H1 (cell line): ENCODE measurements at regions of chr10 and their contacts with region 1.

Region 1: DNA sequence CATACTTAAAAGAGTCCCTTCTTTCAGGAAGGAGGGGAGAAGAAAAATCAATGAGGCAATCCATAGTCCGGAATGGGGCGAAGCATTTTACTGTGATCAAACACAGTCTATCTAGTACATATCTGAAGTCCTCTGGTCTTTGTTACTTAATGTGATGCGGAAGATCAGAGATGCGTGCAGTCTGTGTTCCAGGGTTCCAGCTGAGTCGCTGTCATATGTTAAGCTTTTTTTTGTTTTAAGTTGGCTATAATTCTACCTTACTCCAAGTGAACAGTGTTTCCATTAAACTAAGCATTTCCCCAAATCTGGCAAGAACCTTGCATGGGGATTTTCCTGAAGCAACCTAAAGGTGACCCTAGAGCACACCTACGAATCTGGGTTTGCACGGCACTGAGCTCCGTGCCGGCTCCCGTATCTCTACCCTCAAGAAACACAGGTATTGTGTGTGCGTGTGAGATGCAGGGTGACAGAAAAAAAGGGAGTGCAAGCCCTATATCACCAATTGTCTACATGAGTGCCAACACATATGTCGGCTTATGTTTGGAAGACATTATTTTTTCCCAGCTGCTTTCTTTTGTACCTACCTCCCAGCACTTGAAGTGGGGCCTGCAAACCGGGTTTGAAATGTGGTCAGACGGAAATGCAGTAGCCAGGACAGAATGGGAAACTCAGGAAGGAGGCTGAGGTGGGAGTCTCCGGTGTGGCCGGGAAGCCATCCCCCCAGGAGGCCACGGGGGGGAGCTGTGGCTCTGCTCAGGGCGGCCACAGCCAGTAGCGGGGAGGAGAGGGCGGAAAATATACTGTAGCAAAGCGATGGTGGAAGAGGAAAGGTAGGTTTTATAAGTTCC is 435.8 kb upstream of the MGMT start:
- DNase-seq: peak; percentile 39 to 80
- H3K4me3 ChIP-seq: no peak overlapping the region
- H3K27ac ChIP-seq: no peak overlapping the region
- H3K4me1 ChIP-seq: peaks cover 0 to 7% (median 3%) of the 10 kb centered on the region in 4 experiments; a peak in 2 of 7 replicates
- H3K27me3 ChIP-seq: no peaks in the 10 kb centered on the region; a peak in 1 of 7 replicates
- CTCF ChIP-seq: peak; percentile 85 to 90 (median 85)
- EP300 ChIP-seq: peak in 1 of 2 experiments; percentile 19; a peak in 1 of 3 replicates
- POLR2A ChIP-seq: no peak
- RAD21 ChIP-seq: peak; percentile 98 to 99

Region 2: DNA sequence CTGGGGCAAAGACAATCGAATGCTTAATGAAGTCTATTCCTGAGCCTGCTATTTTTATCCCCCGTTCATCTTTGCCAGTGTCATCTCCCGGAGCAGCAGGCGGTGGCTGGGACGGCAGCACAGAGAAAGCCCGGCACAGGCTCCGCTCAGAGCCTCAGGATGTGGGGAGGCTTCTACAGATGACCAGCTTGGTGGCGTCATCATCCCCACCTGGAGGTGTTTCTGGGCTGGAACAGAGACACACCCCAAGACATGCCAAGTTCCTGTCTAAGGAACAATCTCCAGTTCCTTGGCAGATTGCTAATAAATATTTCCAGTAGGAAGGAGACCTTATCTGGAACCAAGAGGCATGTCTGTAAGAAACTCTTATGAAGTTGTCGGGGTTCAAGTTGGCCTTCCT is 116.5 kb before region 1 on chr10:
- CTCF ChIA-PET with region 1: no interaction called
- POLR2A ChIA-PET with region 1: no interaction called
- DNase-seq: no peak
- H3K4me3 ChIP-seq: no peak overlapping the region
- H3K27ac ChIP-seq: no peak overlapping the region
- H3K4me1 ChIP-seq: no peaks in the 10 kb centered on the region
- H3K27me3 ChIP-seq: no peaks in the 10 kb centered on the region
- CTCF ChIP-seq: no peak
- EP300 ChIP-seq: no peak
- POLR2A ChIP-seq: no peak
- RAD21 ChIP-seq: no peak

Region 3: DNA sequence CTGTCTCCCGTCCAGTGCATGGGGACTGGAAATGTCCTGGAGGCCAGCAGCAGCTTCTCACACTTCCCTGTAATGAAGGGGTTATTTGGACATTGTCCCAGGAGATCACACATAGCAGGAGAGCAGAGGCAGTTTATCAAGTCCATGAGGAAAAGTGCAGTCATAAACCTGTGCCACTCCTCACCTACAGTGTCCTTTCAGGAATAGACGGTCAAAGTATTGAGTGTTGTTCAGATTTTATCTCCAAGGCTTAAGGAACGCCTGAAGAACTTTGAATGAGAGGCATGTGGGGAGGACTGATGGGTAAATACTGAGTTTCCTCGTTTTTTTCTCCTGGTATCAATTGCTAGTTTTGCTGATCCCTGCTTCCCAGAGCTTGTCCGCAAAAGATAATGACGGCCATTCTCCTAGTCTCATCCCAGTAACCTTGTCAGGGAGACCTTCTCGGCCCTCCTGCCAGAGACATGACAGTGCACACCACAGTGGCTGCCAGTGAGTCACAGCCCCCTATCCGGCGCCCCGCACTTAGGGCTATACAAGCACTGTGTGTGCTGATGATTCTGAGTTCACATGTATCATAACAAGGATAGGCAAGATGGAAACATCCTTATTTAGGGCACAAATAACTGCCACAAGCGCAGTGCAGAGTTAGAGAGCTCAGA is 59.7 kb before region 1 on chr10:
- CTCF ChIA-PET with region 1: no interaction called
- POLR2A ChIA-PET with region 1: no interaction called
- DNase-seq: no peak
- H3K4me3 ChIP-seq: no peak overlapping the region
- H3K27ac ChIP-seq: no peak overlapping the region
- H3K4me1 ChIP-seq: peaks cover 0 to 3% (median under 1%) of the 10 kb centered on the region in 4 experiments; a peak in 2 of 7 replicates
- H3K27me3 ChIP-seq: no peaks in the 10 kb centered on the region
- CTCF ChIP-seq: no peak
- EP300 ChIP-seq: no peak
- POLR2A ChIP-seq: no peak
- RAD21 ChIP-seq: no peak

Region 4: DNA sequence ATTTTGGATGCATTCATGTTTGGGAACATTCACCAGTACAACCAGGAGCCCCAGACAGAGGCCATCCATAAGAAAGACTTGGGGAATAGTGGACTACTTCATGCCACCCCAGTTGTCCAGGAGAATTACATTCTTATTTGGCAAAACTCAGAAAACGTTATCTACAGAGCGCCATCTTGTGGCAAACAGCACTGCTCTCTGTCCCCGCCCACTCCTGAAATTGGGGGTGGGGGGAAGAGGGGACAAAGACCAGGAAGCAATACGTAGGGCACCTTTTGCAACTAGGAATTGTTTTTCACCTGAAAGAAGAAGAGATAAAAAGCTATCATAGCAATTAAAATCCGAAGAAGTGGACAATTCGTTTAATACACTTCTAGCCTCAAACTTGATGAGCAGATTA is 301.3 kb after region 1 on chr10:
- CTCF ChIA-PET with region 1: interaction called, 32 read pairs
- POLR2A ChIA-PET with region 1: no interaction called
- DNase-seq: peak; percentile 50 to 79
- H3K4me3 ChIP-seq: no peak overlapping the region
- H3K27ac ChIP-seq: no peak overlapping the region
- H3K4me1 ChIP-seq: peaks cover 0 to 2% (median under 1%) of the 10 kb centered on the region in 4 experiments; a peak in 4 of 7 replicates
- H3K27me3 ChIP-seq: no peaks in the 10 kb centered on the region
- CTCF ChIP-seq: peak; percentile 72 to 85 (median 73)
- EP300 ChIP-seq: no peak
- POLR2A ChIP-seq: no peak
- RAD21 ChIP-seq: peak; percentile 73 to 85

Region 5: GRCh38 chr10:129768437-129769355 is 737.5 kb after region 1 on chr10:
- CTCF ChIA-PET with region 1: interaction called, 10 read pairs
- POLR2A ChIA-PET with region 1: no interaction called
- DNase-seq: peak; percentile 51 to 75
- H3K4me3 ChIP-seq: no peak overlapping the region
- H3K27ac ChIP-seq: no peak overlapping the region
- H3K4me1 ChIP-seq: no peaks in the 10 kb centered on the region; a peak in 1 of 7 replicates
- H3K27me3 ChIP-seq: no peaks in the 10 kb centered on the region
- CTCF ChIP-seq: peak; percentile 76 to 93 (median 81)
- EP300 ChIP-seq: no peak
- POLR2A ChIP-seq: no peak
- RAD21 ChIP-seq: peak; percentile 83 to 88